Activated T-helper 1 cell treated with anti-CD3 and anti-CD28 coated beads, Interleukin-12 subunit alpha, Interleukin-12 subunit beta, Interleukin-2, Interleukin-4 antibody, amounts not matched to agents 30 ng/mL and 10 ng/mL and 1 ng/mL, durations not matched to agents 14 hours and 24 hours and 36 hours (primary cell): ENCODE measurements at regions of chr16 and their contacts with region 1.

Region 1: DNA sequence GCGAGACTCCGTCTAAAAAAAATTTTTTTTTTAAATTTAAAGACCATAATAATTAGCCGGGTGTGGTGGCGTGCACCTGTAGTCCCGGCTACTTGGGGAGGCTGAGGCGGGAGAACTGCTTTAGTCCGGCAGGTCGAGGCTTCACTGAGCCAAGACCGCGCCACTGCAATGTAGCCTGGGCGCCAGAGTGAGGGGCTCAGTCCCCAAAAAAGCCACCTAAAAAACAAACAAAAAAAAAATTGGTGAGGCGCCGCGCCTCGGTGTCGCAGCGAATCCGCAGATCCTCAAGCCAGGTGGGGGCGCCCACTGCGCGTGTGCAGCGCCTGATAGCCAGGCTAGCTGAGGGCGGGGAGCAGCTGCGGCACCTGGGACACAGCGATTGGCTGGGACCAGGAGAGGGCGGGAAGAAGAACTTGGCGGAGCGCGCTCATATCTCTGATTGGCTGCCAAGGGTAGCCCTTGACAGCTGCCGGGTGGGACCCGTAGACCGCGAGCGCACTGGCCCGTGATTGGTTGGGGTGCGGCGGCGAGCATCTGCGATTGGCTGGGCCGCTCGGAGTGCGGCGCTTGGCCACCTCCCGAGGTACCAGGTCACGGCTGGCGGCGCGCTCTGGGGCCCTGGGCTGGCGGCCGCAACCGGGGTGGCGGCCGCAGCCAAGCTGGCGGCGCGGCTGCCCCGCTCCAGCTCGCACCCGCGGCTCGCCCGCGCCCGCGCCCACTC is 9.0 kb upstream of the CLDN9 start:
- DNase-seq: peak; percentile 98
- H3K4me3 Mint-ChIP-seq: peak overlapping the region; percentile 74
- H3K27ac Mint-ChIP-seq: peak overlapping the region; percentile 21
- H3K4me1 Mint-ChIP-seq: peaks cover 22% of the 10 kb centered on the region
- H3K27me3 Mint-ChIP-seq: peaks cover 18% of the 10 kb centered on the region

Region 2: GRCh38 chr16:3023669-3024478 is 20.1 kb after region 1 on chr16 and contains the starts of genes HCFC1R1 and THOC6:
- intact Hi-C with region 1: loop called (anchors 1 kb)
- DNase-seq: peak; percentile 94
- H3K4me3 Mint-ChIP-seq: peak within 1 kb of the TSS; percentile 84
- H3K27ac Mint-ChIP-seq: peak within 1 kb of the TSS; percentile 91
- H3K4me1 Mint-ChIP-seq: peaks cover 36% of the 10 kb centered on the region
- H3K27me3 Mint-ChIP-seq: peaks cover 1% of the 10 kb centered on the region
- total RNA-seq, gene HCFC1R1: 30.0 and 30.9 TPM in 2 replicates
- total RNA-seq, gene THOC6: 48.3 and 49.0 TPM in 2 replicates